ENCODE measurements at regions of chr15 and their contacts with region 1.

Region 1: GRCh38 chr15:23039151-23039916 is at the start of gene TUBGCP5:
- DNase-seq: peak; percentile 93
- ATAC-seq: peak; percentile 96
- H3K4me3 ChIP-seq: peak within 1 kb of the TSS; percentile 75 to 85 (median 77)
- H3K27ac ChIP-seq: peak within 1 kb of the TSS; percentile 79
- H3K4me1 ChIP-seq: peaks cover 17% of the 10 kb centered on the region
- H3K27me3 ChIP-seq: no peaks in the 10 kb centered on the region
- CTCF ChIP-seq: peak; percentile 39
- EP300 ChIP-seq: no peak
- POLR2A ChIP-seq: peak; percentile 97 to 98
- RAD21 ChIP-seq: peak; percentile 19; the same call in 1 of the 2 replicates
- total RNA-seq, gene TUBGCP5: 23.4 and 25.0 TPM in 2 replicates

Region 2: GRCh38 chr15:22786868-22787698 is 252.3 kb before region 1 on chr15:
- CTCF ChIA-PET with region 1: no interaction called
- POLR2A ChIA-PET with region 1: no interaction called
- in situ Hi-C with region 1: loop called (anchors 10 kb)
- intact Hi-C with region 1: no loop called
- DNase-seq: peak; percentile 10
- ATAC-seq: peak; percentile 67
- H3K4me3 ChIP-seq: peak overlapping the region; percentile 82 to 91 (median 84)
- H3K27ac ChIP-seq: peak overlapping the region; percentile 78
- H3K4me1 ChIP-seq: peaks cover 18% of the 10 kb centered on the region
- H3K27me3 ChIP-seq: no peaks in the 10 kb centered on the region
- CTCF ChIP-seq: peak; percentile 4; the same call in 1 of the 2 replicates
- EP300 ChIP-seq: no peak
- POLR2A ChIP-seq: no peak
- RAD21 ChIP-seq: no peak

Region 3: GRCh38 chr15:22980189-22981050 is 58.9 kb before region 1 on chr15 and contains the start of gene CYFIP1:
- CTCF ChIA-PET with region 1: no interaction called
- POLR2A ChIA-PET with region 1: interaction called, 6 read pairs
- in situ Hi-C with region 1: no loop called
- intact Hi-C with region 1: loop called (anchors 1 kb)
- DNase-seq: peak; percentile 68
- ATAC-seq: peak; percentile 84
- H3K4me3 ChIP-seq: peak within 1 kb of the TSS; percentile 66 to 99 (median 96)
- H3K27ac ChIP-seq: peak within 1 kb of the TSS; percentile 54
- H3K4me1 ChIP-seq: peaks cover 21% of the 10 kb centered on the region
- H3K27me3 ChIP-seq: no peaks in the 10 kb centered on the region; a peak in 1 of 5 replicates
- CTCF ChIP-seq: no peak
- EP300 ChIP-seq: no peak
- POLR2A ChIP-seq: peak; percentile 15 to 59; a peak in 2 of 4 replicates
- RAD21 ChIP-seq: 0 out of 2 replicates have a peak, but pooled peaks have one; percentile 6
- total RNA-seq, gene CYFIP1: 58.3 and 68.2 TPM in 2 replicates

Region 4: GRCh38 chr15:23081271-23081670 is 41.9 kb after region 1 on chr15:
- CTCF ChIA-PET with region 1: no interaction called
- POLR2A ChIA-PET with region 1: no interaction called
- in situ Hi-C with region 1: no loop called
- intact Hi-C with region 1: loop called (anchors 2 kb)
- DNase-seq: no peak
- ATAC-seq: no peak
- H3K4me3 ChIP-seq: no peak overlapping the region
- H3K27ac ChIP-seq: no peak overlapping the region
- H3K4me1 ChIP-seq: peaks cover 24% of the 10 kb centered on the region
- H3K27me3 ChIP-seq: no peaks in the 10 kb centered on the region
- CTCF ChIP-seq: no peak
- EP300 ChIP-seq: no peak
- POLR2A ChIP-seq: no peak
- RAD21 ChIP-seq: no peak

Region 5: DNA sequence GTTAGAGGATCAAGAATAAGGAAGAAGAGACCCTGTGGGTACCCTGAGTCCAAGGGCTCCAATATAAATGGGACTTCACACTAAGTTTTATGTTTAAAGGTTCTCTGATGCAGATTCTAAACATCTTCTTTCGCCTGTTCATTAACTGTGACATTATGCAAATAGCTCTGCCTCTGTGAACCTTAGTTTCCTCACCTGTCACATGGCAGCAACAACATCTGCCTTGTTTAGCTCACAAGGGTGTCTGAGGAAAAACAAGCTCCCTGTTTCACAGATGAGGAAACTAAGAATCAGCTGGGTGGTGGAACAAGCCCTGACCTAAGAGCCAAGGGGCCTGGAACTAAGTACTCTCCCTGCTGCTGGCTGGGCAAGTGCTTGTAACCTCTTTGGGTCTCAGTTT is 56.5 kb after region 1 on chr15:
- CTCF ChIA-PET with region 1: no interaction called
- POLR2A ChIA-PET with region 1: no interaction called
- in situ Hi-C with region 1: no loop called
- intact Hi-C with region 1: no loop called
- DNase-seq: no peak
- ATAC-seq: no peak
- H3K4me3 ChIP-seq: no peak overlapping the region
- H3K27ac ChIP-seq: no peak overlapping the region
- H3K4me1 ChIP-seq: no peaks in the 10 kb centered on the region
- H3K27me3 ChIP-seq: peaks cover 0 to 3% of the 10 kb centered on the region in 2 experiments; a peak in 1 of 5 replicates
- CTCF ChIP-seq: no peak
- EP300 ChIP-seq: no peak
- POLR2A ChIP-seq: no peak
- RAD21 ChIP-seq: no peak

Region 6: GRCh38 chr15:23467110-23467600 is 427.8 kb after region 1 on chr15:
- CTCF ChIA-PET with region 1: interaction called, 3 read pairs
- POLR2A ChIA-PET with region 1: no interaction called
- in situ Hi-C with region 1: no loop called
- intact Hi-C with region 1: loop called (anchors 5 kb)
- DNase-seq: peak; percentile 23
- ATAC-seq: peak; percentile 57; the same call in 2 of the 3 replicates
- H3K4me3 ChIP-seq: no peak overlapping the region
- H3K27ac ChIP-seq: no peak overlapping the region
- H3K4me1 ChIP-seq: no peaks in the 10 kb centered on the region
- H3K27me3 ChIP-seq: no peaks in the 10 kb centered on the region; a peak in 1 of 5 replicates
- CTCF ChIP-seq: peak; percentile 65
- EP300 ChIP-seq: no peak
- POLR2A ChIP-seq: no peak
- RAD21 ChIP-seq: peak; percentile 42; the same call in 1 of the 2 replicates